ENCODE measurements at regions of chr10 and their contacts with region 1.

Region 1: DNA sequence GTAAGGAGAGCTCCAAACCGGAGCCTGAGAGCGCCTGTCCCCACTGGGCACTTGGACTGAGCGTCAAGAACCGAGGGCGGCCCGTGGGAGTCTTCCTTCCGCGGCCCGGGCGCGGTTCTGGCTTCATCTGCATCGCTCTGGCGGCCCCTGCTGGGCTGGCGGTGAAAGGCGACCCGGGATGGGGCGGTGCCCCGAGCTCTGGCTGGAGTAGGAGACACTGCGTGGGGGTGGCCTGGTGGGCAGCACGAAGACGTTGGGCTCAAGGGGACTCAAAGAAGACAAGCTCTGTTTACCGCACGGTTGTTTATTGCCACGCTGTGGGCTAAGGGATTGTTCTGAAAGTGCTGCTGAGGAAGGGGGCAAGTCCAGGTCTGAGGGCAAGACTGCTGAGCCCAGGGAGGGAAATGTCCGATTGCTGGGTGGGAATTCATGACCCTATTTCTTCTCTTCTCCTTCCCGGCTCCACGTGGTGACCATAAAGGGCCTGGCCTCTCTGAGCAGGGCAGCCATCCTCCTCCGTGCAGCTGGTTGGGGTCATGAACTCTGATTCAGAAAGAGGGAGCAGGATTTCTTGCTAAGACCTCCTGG is 29.8 kb downstream of the PLAU start:
- DNase-seq: peak; percentile 71 to 90 (median 82)
- ATAC-seq: peak; percentile 100
- H3K4me3 ChIP-seq: peak overlapping the region; percentile 3
- H3K4me3 Mint-ChIP-seq: no peak overlapping the region
- H3K27ac ChIP-seq: no peak overlapping the region
- H3K27ac Mint-ChIP-seq: no peak overlapping the region
- H3K4me1 ChIP-seq: peaks cover 9% of the 10 kb centered on the region
- H3K4me1 Mint-ChIP-seq: peaks cover 8% of the 10 kb centered on the region
- H3K27me3 ChIP-seq: no peaks in the 10 kb centered on the region
- H3K27me3 Mint-ChIP-seq: no peaks in the 10 kb centered on the region
- CTCF ChIP-seq: peak; percentile 95

Region 2: DNA sequence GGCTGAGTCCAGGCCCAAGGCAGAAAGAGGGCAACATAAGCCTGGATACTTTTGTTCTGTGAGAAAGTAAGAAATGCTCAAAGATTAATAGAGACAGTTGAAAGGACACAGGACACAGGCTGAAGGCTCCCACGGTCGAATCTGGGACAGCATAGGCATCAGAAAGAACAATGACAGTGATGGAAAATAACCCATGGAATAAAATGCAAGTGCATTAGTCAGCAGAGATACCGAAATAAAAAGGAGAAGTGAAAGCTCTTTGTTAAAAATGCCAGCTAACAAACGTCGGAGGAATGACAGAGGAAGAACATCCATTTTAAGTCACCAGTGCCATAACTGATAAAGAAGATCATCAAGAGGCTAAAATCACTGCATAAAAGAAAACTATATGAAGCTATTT is 223.2 kb before region 1 on chr10:
- CTCF ChIA-PET with region 1: no interaction called
- POLR2A ChIA-PET with region 1: no interaction called
- intact Hi-C with region 1: no loop called
- DNase-seq: peak in 2 of 14 experiments; percentile 23 to 28
- ATAC-seq: no peak
- H3K4me3 ChIP-seq: no peak overlapping the region
- H3K4me3 Mint-ChIP-seq: no peak overlapping the region
- H3K27ac ChIP-seq: no peak overlapping the region
- H3K27ac Mint-ChIP-seq: peak overlapping the region; percentile 22
- H3K4me1 ChIP-seq: no peaks in the 10 kb centered on the region
- H3K4me1 Mint-ChIP-seq: no peaks in the 10 kb centered on the region
- H3K27me3 ChIP-seq: no peaks in the 10 kb centered on the region
- H3K27me3 Mint-ChIP-seq: no peaks in the 10 kb centered on the region
- CTCF ChIP-seq: no peak

Region 3: DNA sequence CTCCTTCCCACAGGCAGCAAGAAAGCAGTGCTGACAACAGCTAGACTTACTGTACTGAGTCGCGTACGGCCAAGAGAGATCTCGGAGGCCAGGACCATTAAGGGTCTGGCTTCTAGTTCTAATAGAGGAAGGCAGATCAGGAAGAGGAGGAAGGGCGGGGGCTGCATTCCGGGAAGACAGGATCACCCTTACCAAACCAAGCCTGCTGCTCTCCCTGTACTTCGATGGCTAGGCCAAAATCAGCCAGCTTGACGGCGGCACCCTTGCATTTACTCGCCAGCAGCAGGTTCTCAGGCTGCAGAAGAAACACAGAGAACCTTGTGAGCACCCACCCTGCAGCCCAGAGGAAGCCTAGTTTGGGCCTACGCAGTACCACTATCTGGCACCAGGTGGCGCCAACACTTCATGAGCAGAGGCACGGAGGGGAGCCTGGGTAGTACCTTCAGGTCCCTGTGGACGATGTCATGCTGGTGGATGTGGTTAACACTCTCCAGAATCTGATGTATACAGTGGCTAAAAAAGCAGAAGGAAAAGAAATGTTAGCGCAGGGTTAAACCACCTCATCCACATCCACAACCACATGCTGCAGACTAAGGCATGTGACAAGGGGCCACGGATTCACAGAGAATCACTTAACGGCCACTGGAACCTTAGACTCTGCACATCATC is 91.8 kb before region 1 on chr10:
- CTCF ChIA-PET with region 1: interaction called, 44 read pairs
- POLR2A ChIA-PET with region 1: interaction called, 3 read pairs
- intact Hi-C with region 1: loop called (anchors 1 to 2 kb)
- DNase-seq: peak; percentile 87 to 95 (median 94)
- ATAC-seq: peak; percentile 100
- H3K4me3 ChIP-seq: no peak overlapping the region
- H3K4me3 Mint-ChIP-seq: no peak overlapping the region
- H3K27ac ChIP-seq: peak overlapping the region; percentile 31 to 36
- H3K27ac Mint-ChIP-seq: peak overlapping the region; percentile 89
- H3K4me1 ChIP-seq: peaks cover 13% of the 10 kb centered on the region
- H3K4me1 Mint-ChIP-seq: peaks cover 16% of the 10 kb centered on the region
- H3K27me3 ChIP-seq: no peaks in the 10 kb centered on the region
- H3K27me3 Mint-ChIP-seq: no peaks in the 10 kb centered on the region
- CTCF ChIP-seq: peak; percentile 98

Region 4: GRCh38 chr10:73892310-73893030 is 48.3 kb before region 1 on chr10:
- CTCF ChIA-PET with region 1: interaction called, 62 read pairs
- POLR2A ChIA-PET with region 1: interaction called, 3 read pairs
- intact Hi-C with region 1: no loop called
- DNase-seq: no peak
- ATAC-seq: no peak
- H3K4me3 ChIP-seq: no peak overlapping the region
- H3K4me3 Mint-ChIP-seq: no peak overlapping the region
- H3K27ac ChIP-seq: no peak overlapping the region
- H3K27ac Mint-ChIP-seq: no peak overlapping the region
- H3K4me1 ChIP-seq: no peaks in the 10 kb centered on the region
- H3K4me1 Mint-ChIP-seq: no peaks in the 10 kb centered on the region
- H3K27me3 ChIP-seq: no peaks in the 10 kb centered on the region
- H3K27me3 Mint-ChIP-seq: no peaks in the 10 kb centered on the region
- CTCF ChIP-seq: no peak

Region 5: GRCh38 chr10:73956476-73957359 is 16.0 kb after region 1 on chr10:
- CTCF ChIA-PET with region 1: interaction called, 10 read pairs
- POLR2A ChIA-PET with region 1: interaction called, 13 read pairs
- intact Hi-C with region 1: no loop called
- DNase-seq: peak in 6 of 14 experiments; percentile 12 to 91 (median 54)
- ATAC-seq: peak; percentile 78
- H3K4me3 ChIP-seq: peak overlapping the region; percentile 19
- H3K4me3 Mint-ChIP-seq: peak overlapping the region; percentile 69
- H3K27ac ChIP-seq: peak overlapping the region; percentile 57 to 62
- H3K27ac Mint-ChIP-seq: peak overlapping the region; percentile 92
- H3K4me1 ChIP-seq: peaks cover 63% of the 10 kb centered on the region
- H3K4me1 Mint-ChIP-seq: peaks cover 58% of the 10 kb centered on the region
- H3K27me3 ChIP-seq: no peaks in the 10 kb centered on the region
- H3K27me3 Mint-ChIP-seq: no peaks in the 10 kb centered on the region
- CTCF ChIP-seq: no peak

Region 6: DNA sequence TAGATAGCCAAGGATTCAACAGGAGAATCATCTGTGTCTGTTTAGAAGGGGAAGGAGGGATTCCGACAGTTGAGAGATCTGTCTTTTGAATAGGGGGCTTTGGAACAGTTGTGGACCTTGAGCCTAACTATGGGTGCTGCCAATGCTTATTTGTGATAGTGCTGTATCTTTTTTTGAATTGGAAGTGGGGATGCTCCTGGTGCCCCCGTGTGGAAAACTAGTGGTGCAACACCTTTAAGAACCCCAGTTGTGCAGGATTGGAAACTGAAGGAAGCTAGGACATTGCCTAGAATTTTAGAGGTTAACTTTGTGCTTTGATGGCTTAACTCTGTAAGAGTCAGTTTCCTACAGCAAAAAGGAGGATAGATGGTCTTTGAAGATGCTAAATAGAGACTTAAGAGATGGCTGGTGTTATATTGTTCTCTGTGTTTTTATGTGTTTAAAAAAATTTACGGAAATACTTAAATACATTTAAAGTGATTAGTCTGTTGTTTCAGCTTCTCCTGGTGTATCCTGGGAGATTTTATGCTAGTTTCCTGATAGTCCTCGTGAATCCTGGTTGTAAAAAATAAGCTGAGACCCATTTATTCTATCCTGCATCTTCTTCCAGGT is 140.6 kb after region 1 on chr10:
- CTCF ChIA-PET with region 1: interaction called, 8 read pairs
- POLR2A ChIA-PET with region 1: no interaction called
- intact Hi-C with region 1: loop called (anchors 2 to 5 kb)
- DNase-seq: peak in 13 of 14 experiments; percentile 6 to 71 (median 20)
- ATAC-seq: peak; percentile 84
- H3K4me3 ChIP-seq: no peak overlapping the region
- H3K4me3 Mint-ChIP-seq: no peak overlapping the region
- H3K27ac ChIP-seq: no peak overlapping the region
- H3K27ac Mint-ChIP-seq: no peak overlapping the region
- H3K4me1 ChIP-seq: no peaks in the 10 kb centered on the region
- H3K4me1 Mint-ChIP-seq: peaks cover 15% of the 10 kb centered on the region
- H3K27me3 ChIP-seq: no peaks in the 10 kb centered on the region
- H3K27me3 Mint-ChIP-seq: no peaks in the 10 kb centered on the region
- CTCF ChIP-seq: peak; percentile 82

Region 7: DNA sequence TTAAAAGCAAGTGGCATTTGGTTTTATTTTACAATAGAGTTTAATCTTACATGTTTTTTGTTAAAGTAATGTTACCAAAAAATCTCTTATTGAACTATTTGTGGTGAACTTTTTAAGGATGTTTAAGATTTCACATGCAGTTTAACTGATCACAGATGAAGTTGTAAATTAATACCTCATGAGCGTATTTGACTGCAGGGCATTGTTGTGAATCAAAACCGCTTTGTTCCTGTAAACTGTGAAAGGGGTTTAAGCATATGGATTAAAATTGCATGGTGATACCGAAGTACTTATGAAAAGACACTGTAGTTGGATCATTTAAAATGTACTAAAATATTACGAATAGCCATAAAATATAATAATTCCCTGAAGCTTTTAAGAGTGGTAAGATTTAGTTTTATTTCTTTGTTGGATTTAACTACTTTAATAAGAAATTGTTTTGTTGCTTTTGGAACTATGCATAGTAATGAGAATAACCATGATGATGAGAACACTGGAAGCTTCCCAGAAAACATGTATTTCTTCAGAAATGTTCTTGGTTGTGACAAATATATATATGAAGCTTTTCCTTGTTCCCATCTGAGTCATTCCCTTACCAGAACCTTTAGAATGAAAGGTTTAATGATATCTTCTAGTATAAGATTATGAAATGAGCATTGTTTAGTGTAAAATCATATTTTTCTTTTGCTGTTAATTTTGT is 341.6 kb after region 1 on chr10:
- CTCF ChIA-PET with region 1: no interaction called
- POLR2A ChIA-PET with region 1: no interaction called
- intact Hi-C with region 1: no loop called
- DNase-seq: no peak
- ATAC-seq: no peak
- H3K4me3 ChIP-seq: no peak overlapping the region
- H3K4me3 Mint-ChIP-seq: no peak overlapping the region
- H3K27ac ChIP-seq: no peak overlapping the region
- H3K27ac Mint-ChIP-seq: peak overlapping the region; percentile 43
- H3K4me1 ChIP-seq: peaks cover 2% of the 10 kb centered on the region
- H3K4me1 Mint-ChIP-seq: peaks cover 18% of the 10 kb centered on the region
- H3K27me3 ChIP-seq: no peaks in the 10 kb centered on the region
- H3K27me3 Mint-ChIP-seq: no peaks in the 10 kb centered on the region
- CTCF ChIP-seq: no peak

Measured in CD4-positive, alpha-beta T cell (primary cell).